AG04450 (cell line): ENCODE measurements at regions of chr4 and their contacts with region 1.

Region 1: DNA sequence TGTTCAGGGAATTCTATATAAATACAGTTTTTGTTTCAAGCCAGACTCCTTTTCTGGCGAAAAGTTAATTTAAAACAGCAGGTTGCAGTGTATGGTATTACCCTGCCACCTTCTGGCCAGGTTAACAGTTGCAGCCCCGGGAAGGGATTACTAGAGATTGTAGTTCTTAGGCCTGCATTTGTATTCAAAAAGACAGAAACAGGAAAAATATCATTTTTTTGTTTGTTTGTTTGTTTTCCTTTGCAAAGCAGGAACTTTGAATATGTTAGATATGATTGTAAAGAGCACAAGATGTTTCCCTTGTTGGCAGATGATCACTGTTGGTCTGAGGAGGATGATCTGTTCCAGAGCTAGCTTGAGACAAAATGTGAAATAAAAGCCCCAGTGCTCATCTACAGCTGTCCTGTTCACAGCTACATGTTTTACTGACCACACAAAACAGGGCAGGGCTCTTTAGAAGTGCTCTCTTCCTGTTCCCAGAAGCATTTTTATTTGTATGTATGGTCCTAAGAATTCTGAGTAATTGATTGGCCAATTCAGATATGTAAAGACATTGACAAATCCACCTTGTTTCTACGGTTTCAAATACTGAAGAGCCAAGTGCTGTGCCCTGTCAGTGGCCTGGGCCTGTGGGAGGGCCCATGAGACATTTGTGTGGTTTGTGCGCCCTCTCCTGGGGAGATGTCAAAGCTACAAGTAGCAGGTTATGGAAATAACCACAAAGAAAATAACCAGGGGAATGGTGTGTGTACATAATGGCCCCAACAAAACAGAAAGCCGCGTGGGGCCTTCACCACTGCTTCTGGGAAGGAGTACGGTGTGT is 57.9 kb downstream of the CLDN22 start:
- DNase-seq: peak; percentile 62
- H3K4me3 ChIP-seq: no peak overlapping the region
- H3K27ac ChIP-seq: no peak overlapping the region
- H3K27me3 ChIP-seq: no peaks in the 10 kb centered on the region
- CTCF ChIP-seq: peak; percentile 84

Region 2: GRCh38 chr4:182925298-182925738 is 336.8 kb before region 1 on chr4:
- CTCF ChIA-PET with region 1: interaction called, 34 read pairs
- POLR2A ChIA-PET with region 1: no interaction called
- DNase-seq: no peak
- H3K4me3 ChIP-seq: no peak overlapping the region
- H3K27ac ChIP-seq: peak overlapping the region; percentile 47
- H3K27me3 ChIP-seq: no peaks in the 10 kb centered on the region
- CTCF ChIP-seq: peak; percentile 68

Region 3: DNA sequence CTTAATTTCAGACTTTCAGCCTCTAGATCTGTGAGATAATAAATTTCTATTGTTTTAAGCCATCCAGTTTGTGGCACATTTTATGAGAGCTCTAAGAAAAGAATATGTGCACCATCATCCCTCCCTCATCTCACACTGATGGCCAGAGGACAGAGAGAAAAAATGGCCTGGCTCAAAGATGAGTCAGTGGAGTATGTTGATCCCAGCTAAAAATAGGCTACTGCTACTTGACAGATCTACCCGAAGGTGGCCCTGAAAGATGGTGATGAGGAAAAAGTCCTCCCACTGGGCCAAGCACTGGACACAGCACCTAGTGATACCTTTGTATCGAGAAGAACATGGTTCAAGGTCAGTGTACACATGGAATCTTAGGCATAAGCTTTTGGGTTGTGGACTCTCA is 306.8 kb before region 1 on chr4:
- CTCF ChIA-PET with region 1: interaction called, 10 read pairs
- POLR2A ChIA-PET with region 1: no interaction called
- DNase-seq: no peak
- H3K4me3 ChIP-seq: no peak overlapping the region
- H3K27ac ChIP-seq: no peak overlapping the region
- H3K27me3 ChIP-seq: no peaks in the 10 kb centered on the region
- CTCF ChIP-seq: no peak

Region 4: GRCh38 chr4:183098723-183099536 is 163.2 kb before region 1 on chr4 and contains the start of gene WWC2:
- CTCF ChIA-PET with region 1: interaction called, 23 read pairs
- POLR2A ChIA-PET with region 1: interaction called, 4 read pairs
- DNase-seq: peak; percentile 79
- H3K4me3 ChIP-seq: peak within 1 kb of the TSS; percentile 91
- H3K27ac ChIP-seq: peak within 1 kb of the TSS; percentile 98
- H3K27me3 ChIP-seq: no peaks in the 10 kb centered on the region
- CTCF ChIP-seq: no peak
- polyA plus RNA-seq, gene WWC2: 36.3 and 43.6 TPM in 2 replicates

Region 5: DNA sequence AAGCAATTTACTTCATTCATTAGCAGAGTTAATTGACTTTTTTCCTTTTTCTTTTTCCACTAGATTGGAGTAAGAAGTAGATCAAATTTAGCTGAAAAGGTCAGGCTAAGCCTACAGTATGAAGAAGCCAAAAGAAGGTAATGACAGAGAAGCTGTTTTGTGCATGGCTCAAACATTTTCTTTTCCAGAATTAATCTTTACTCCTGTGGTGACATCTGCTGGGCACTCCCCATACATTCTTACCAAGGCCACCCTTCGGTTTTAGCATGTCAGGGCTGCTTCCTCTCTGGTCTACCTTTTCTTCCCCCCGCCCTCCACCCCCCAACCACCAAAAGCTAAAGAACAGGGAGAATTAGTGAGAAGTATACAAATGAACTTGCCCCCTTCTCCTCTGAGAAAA is 12.3 kb before region 1 on chr4:
- CTCF ChIA-PET with region 1: interaction called, 47 read pairs
- POLR2A ChIA-PET with region 1: no interaction called
- DNase-seq: no peak
- H3K4me3 ChIP-seq: no peak overlapping the region
- H3K27ac ChIP-seq: no peak overlapping the region
- H3K27me3 ChIP-seq: no peaks in the 10 kb centered on the region
- CTCF ChIP-seq: peak; percentile 45

Region 6: GRCh38 chr4:183284965-183285364 is 22.8 kb after region 1 on chr4:
- CTCF ChIA-PET with region 1: interaction called, 13 read pairs
- POLR2A ChIA-PET with region 1: no interaction called
- DNase-seq: peak; percentile 88
- H3K4me3 ChIP-seq: no peak overlapping the region
- H3K27ac ChIP-seq: peak overlapping the region; percentile 54
- H3K27me3 ChIP-seq: no peaks in the 10 kb centered on the region
- CTCF ChIP-seq: no peak